Heart right ventricle (tissue), 16 donors: ENCODE measurements at regions of chr6 and their contacts with region 1.

Region 1: DNA sequence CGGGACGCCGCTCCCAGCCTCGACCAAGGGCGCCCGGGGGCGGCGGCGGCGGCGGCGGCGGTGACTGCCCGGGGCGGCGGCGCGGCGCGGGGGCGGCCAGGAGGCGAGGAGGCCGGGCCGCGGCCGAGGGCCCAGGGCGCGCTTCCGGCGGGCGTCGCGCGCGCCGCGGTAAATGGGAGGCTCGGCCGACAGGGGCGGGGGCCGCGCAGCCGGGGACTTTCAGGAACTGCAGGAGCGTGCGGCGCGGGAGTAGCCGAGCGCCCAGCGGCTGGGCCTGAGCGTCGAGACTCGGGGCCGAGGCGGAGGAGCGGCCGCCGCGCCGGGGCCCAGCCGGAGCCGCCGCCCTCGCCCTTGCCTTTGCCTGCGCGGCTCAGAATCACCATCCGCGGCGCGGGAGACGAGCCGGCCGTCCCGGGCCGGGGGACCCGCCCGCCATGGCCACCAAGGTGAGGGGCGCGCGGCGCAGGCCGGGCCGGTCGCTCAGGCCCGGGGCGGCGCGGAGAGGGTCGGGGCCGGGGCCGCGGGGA is at the start of gene SNX9:
- DNase-seq: peak; percentile 80 to 82
- ATAC-seq: peak; percentile 83 to 94 (median 91)
- H3K4me3 ChIP-seq: peak within 1 kb of the TSS; percentile 82 to 99 (median 93)
- H3K27ac ChIP-seq: peak within 1 kb of the TSS; percentile 90 to 100 (median 98)
- H3K4me1 ChIP-seq: peaks cover 13 to 37% (median 30%) of the 10 kb centered on the region in 9 donors
- H3K27me3 ChIP-seq: no peaks in the 10 kb centered on the region
- CTCF ChIP-seq: peak in 1 of 9 donors; percentile 5
- total RNA-seq, gene SNX9: 27.9 to 39.7 (median 31.6) TPM

Region 2: GRCh38 chr6:157726892-157727628 is 96.0 kb before region 1 on chr6:
- intact Hi-C with region 1: no loop called
- DNase-seq: peak; percentile 63 to 70
- ATAC-seq: peak; percentile 69 to 87 (median 80)
- H3K4me3 ChIP-seq: no peak overlapping the region
- H3K27ac ChIP-seq: peak overlapping the region in 9 of 10 donors; percentile 6 to 71 (median 46)
- H3K4me1 ChIP-seq: peaks cover 3 to 27% (median 14%) of the 10 kb centered on the region in 9 donors
- H3K27me3 ChIP-seq: no peaks in the 10 kb centered on the region
- CTCF ChIP-seq: no peak

Region 3: GRCh38 chr6:157756708-157757429 is 66.2 kb before region 1 on chr6:
- intact Hi-C with region 1: loop called in 5 of 10 experiments (anchors 5 kb)
- DNase-seq: peak; percentile 83 to 90
- ATAC-seq: peak; percentile 85 to 94 (median 90)
- H3K4me3 ChIP-seq: peak overlapping the region in 1 of 10 donors; percentile 2
- H3K27ac ChIP-seq: peak overlapping the region in 3 of 10 donors; percentile 17 to 54 (median 32)
- H3K4me1 ChIP-seq: peaks cover 0 to 46% (median 21%) of the 10 kb centered on the region in 9 donors
- H3K27me3 ChIP-seq: no peaks in the 10 kb centered on the region
- CTCF ChIP-seq: peak; percentile 66 to 90 (median 83)

Region 4: GRCh38 chr6:157764178-157765033 is 58.7 kb before region 1 on chr6:
- intact Hi-C with region 1: loop called in 5 of 10 experiments (anchors 5 kb)
- DNase-seq: peak; percentile 69 to 71
- ATAC-seq: peak; percentile 68 to 92 (median 84)
- H3K4me3 ChIP-seq: no peak overlapping the region
- H3K27ac ChIP-seq: peak overlapping the region in 9 of 10 donors; percentile 9 to 89 (median 52)
- H3K4me1 ChIP-seq: peaks cover 4 to 89% (median 46%) of the 10 kb centered on the region in 9 donors
- H3K27me3 ChIP-seq: no peaks in the 10 kb centered on the region
- CTCF ChIP-seq: no peak

Region 5: DNA sequence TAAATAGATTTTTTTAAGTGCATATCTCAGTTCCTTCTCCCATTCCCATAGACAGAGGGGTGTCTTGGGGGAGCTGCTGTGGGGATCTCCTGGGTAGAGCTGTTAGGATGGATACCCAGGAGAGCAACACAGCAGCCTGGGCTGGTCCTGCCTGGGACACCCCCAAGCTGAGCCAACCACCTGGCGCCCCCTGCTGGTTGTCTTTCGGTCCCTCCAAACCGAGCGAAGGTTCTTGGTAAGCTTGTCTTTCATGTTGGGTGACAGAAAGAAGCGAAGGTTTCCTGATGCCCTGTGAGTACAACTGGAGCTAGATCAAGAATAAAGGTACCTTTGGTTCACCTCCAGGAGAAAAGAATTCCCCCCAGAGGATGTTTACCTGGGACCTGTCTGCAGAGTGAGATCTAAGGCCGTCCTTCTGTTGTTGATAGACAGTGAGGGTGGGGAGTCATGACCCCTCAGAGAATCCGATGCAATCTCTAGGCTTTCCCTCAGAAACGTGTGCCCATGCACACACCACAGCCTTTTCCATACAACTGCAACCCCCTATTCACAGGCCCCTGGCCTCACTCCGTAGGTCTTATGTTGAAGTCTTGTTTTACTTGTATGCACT is 50.8 kb after region 1 on chr6:
- intact Hi-C with region 1: loop called in 1 of 10 experiments (anchors 5 kb)
- DNase-seq: peak; percentile 66 to 82
- ATAC-seq: peak; percentile 62 to 83 (median 72)
- H3K4me3 ChIP-seq: no peak overlapping the region
- H3K27ac ChIP-seq: no peak overlapping the region
- H3K4me1 ChIP-seq: peaks cover 0 to 6% (median 0%) of the 10 kb centered on the region in 9 donors
- H3K27me3 ChIP-seq: no peaks in the 10 kb centered on the region
- CTCF ChIP-seq: peak; percentile 64 to 87 (median 79)